ENCODE measurements at regions of chr11 and their contacts with region 1.

Region 1: DNA sequence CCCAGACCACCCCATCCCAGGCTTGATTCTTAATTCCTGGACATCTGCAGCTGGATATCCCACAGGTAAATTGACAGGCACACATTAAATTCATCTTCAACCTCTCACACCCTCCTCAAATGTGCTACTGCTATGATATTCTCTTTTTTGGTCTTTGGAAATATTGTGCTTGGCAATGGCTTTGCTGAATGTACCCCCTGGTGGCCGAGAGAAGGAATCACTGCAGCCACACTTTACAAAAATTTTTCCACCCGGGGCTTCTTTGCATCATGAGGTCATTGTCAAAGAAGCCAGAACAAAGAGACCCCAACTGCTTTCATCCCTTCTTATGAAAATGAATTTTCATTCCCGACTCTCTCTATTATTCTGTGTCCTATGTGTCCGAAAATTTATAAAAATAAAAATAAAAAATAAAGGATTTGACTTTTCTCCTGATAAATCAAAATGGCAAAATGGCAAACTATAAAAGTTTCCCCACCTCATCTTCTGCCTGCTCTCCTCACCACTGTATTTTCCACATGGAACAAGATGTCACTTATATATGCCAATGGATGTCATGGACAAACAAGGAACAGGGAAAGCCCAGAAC is 15.0 kb upstream of the CYB5R2 start:
- DNase-seq: no peak
- H3K4me3 ChIP-seq: no peak overlapping the region
- CTCF ChIP-seq: peak; percentile 69

Region 2: DNA sequence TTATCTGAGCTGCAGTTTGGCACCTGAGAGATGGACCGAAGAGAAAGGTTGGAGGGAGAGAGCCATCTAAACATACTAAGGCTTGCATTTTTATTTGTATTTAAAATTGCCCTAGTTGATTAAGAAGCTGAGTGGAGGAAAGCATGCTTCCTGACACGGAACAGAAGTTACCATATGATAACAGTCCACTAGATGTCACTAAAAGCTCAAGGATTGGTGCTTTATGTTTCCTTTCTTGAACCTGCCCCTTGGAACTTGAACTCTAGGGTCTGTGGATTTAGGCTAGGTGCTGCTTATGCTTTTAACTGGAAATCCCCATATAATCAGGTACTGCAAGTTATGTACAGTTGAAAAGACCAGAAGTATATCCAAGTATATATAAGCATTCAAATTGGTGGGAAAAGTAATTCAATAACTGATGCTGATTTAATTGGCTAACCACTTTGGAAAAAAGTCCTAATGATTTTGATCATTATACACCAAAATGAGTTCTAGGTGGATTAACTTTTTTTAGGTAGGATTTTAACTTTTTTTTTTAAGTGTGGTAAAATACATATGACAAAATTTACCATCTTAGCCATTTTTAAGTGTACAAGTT is 590.0 kb before region 1 on chr11:
- CTCF ChIA-PET with region 1: interaction called, 17 read pairs
- POLR2A ChIA-PET with region 1: no interaction called
- DNase-seq: no peak
- H3K4me3 ChIP-seq: no peak overlapping the region
- CTCF ChIP-seq: peak; percentile 42

Region 3: DNA sequence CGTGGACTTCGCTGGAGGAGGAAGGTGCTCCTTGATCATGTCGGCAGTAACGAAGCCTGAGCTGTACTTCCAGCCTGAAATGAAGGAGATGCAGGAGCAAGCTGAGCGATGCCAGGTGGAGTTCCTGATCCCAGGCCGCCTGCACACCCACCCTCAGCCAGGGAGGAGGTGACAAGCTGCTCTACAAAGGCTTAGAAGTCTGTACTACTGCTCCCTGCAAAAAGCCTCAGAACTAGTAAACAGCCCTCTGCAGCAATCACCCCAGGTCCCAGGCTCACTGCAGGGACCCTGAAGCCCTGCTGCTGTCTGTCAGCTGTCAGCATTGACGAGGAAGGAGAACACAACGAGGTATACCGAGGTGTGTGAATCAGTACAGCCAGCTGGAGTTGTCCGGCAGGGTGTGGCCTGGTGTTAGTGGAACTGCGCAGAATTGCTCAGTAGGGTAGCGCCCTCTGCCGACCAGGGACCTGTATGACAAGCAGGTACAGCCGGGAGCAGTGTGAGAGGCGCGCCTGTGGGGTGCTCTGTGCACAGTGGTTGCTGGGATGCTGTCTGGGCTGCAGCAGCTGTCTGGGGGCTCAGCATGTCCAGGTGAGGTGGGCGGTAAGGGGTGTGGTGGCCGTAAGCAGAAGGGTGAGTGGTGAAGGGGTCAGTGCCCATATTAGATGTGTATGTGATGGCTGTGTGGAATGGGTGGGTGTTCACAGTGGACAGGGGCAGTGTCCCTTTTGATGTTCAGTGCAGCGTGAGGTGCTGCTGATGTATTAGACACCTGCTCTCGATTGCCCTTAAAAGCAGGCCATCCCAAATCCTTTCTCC is 22.6 kb before region 1 on chr11:
- CTCF ChIA-PET with region 1: interaction called, 50 read pairs
- POLR2A ChIA-PET with region 1: no interaction called
- DNase-seq: no peak
- H3K4me3 ChIP-seq: no peak overlapping the region
- CTCF ChIP-seq: peak; percentile 86

Region 4: GRCh38 chr11:7672960-7673723 is 15.2 kb before region 1 on chr11 and contains the start of gene CYB5R2:
- CTCF ChIA-PET with region 1: interaction called, 65 read pairs
- POLR2A ChIA-PET with region 1: no interaction called
- DNase-seq: no peak
- H3K4me3 ChIP-seq: peak within 1 kb of the TSS; percentile 59
- CTCF ChIP-seq: no peak